BJ (cell line): ENCODE measurements at regions of chr1 and their contacts with region 1.

Region 1: DNA sequence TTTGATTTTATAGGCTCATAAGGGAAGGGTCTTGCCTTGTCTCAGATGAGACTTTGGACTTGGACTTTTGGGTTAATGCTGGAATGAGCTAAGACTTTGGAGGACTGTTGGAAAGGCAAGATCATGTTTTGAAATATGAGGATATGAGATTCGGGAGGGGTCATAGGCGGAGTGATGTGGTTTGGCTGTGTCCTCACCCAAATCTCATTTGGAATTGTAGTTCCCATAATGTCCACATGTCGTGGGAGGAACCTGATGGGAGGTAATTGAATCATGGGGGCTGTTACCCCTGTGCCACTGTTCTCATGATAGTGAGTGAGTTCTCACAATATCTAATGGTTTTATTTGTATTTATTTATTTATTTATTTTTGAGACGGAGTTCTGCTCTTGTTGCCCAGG is 6.9 kb upstream of the CSDE1 start:
- DNase-seq: no peak
- H3K4me3 ChIP-seq: no peak overlapping the region
- H3K27me3 ChIP-seq: no peaks in the 10 kb centered on the region
- CTCF ChIP-seq: no peak

Region 2: DNA sequence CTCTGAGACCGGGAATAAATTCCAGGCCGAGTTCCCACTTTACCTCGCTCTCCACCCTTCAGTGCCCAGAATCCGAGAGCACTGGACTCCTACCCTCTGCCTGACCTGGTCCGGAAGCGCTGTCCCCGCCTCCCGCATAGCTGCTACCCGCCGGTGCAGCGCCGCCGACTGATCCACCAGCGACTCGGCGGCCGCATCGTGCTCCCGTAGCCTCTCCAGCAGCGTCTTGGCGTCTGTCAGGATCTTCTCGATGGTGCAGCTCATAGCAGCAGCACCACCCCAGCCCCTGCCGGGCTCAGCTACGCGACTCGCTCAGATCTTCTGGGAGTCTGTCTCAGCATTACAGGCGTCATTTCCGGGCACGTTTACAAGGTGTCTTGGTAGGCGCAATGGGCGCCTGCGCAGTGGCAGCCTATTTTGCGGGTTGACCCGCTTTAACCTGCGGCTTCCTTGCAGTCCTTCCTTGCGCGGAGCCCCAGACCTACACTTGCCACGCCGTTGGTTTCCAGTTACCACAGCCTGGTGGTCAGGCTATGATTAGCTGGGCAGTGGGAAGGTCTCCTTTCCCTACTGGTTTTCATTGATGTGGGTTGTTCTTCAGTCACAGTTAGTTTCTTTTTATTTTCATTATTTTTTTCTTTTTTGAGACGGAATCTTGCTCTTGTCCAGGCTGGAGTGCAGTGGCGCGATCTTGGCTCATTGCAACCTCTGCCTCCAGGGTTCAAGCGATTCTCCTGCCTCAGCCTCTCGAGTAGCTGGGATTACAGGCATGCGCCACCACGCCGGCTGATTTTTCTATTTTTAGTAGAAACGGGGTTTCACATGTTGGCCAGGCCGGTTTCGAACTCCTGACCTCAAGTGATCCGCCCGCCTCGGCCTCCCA is 15.9 kb after region 1 on chr1 and contains the start of gene SIKE1:
- CTCF ChIA-PET with region 1: interaction called, 5 read pairs
- POLR2A ChIA-PET with region 1: interaction called, 18 read pairs
- DNase-seq: peak; percentile 57
- H3K4me3 ChIP-seq: peak within 1 kb of the TSS; percentile 75
- H3K27me3 ChIP-seq: no peaks in the 10 kb centered on the region
- CTCF ChIP-seq: peak; percentile 25; the same call in 1 of the 2 replicates
- polyA plus RNA-seq, gene SIKE1: 26.4 and 32.9 TPM in 2 replicates

Region 3: DNA sequence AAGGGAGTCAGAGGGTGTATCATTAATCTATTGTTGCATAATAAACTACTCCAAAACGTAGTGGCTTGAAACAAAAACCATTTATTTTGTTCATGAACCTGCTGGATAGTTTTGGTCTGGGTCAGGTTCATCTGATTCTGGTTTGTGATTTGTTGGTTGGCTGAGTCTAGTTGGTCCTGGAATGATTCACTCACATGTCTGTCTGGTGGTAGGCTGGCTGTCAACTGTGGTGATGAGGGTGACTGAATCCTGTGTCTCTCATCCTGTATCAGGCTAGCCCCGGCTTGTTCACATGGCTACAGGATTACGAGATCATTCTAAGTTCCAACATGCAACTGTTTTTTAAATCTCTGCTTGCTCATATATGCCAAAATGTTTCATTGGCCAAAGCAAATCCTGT is 38.3 kb after region 1 on chr1:
- CTCF ChIA-PET with region 1: no interaction called
- POLR2A ChIA-PET with region 1: no interaction called
- DNase-seq: no peak
- H3K4me3 ChIP-seq: no peak overlapping the region
- H3K27me3 ChIP-seq: peaks cover 2% of the 10 kb centered on the region
- CTCF ChIP-seq: no peak